GM10248 (cell line): ENCODE measurements at regions of chr19 and their contacts with region 1.

Region 1: DNA sequence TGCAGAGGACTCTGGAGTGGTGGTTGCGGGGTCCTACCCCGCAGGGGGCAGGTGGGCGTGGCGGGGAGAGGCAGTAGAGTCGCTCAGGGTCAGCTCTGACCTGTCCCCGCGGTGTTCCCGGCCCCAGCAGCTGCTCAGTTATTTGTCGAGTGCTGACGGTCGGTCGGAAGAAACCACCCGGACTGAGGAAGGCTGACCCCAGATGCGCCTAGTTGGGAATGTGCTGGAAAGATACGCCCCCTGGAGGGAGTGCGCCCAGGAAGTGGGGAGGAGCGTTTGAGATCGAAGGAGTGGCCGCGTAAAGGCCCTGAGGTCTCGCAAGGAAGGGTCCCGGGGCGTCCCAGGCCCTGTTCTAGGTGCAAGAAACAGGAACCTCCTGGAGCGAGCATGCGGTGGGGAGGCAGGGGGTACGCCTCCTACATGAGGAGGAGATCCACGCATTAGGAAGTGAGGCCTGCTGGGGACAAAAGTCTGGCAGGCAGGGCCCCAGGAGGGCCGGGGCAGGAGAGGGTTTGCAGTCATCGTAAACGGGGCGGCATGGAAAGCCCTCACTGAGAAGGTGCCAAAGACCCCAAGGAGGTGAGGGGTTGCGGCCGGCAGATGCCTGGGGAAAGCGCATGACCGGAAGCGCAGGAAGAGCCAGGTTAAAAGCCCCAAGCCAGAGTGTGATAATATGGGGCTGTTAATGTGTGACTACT is 9.2 kb downstream of the CCDC8 start:
- DNase-seq: no peak
- CTCF ChIP-seq: no peak

Region 2: DNA sequence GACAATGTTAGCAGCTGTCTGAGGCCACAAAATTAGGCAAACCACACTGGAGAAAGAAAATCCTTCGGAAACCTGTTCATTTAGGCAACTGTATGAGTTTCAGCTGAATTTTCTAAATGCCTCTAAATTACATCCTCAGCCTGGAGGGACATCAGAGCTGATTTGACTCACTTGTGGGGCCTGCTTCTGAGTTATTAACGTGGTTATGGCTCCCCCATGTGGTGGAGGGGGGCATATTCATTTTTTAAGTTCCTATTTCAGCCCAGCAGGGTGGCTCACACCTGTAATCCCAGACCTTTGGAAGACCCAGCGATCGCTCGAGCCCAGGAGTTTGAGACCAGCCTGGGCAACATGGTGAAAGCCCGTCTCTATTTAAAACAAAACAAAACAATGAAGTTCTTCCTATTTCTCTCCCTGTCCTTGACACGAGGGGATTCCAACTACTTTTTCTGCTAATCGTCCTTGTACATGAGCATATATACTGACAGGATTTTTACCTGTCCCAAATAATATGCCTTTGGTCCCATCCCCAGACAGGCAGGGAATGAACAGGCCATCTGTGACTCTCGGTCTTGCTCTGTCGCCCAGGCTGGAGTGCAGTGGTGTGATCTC is 138.9 kb before region 1 on chr19:
- CTCF ChIA-PET with region 1: no interaction called
- POLR2A ChIA-PET with region 1: no interaction called
- DNase-seq: peak; percentile 73
- CTCF ChIP-seq: peak; percentile 75

Region 3: GRCh38 chr19:46339446-46339845 is 64.8 kb before region 1 on chr19:
- CTCF ChIA-PET with region 1: no interaction called
- POLR2A ChIA-PET with region 1: no interaction called
- DNase-seq: no peak
- CTCF ChIP-seq: no peak

Region 4: GRCh38 chr19:46392243-46392801 is 11.9 kb before region 1 on chr19:
- CTCF ChIA-PET with region 1: interaction called, 13 read pairs
- POLR2A ChIA-PET with region 1: interaction called, 3 read pairs
- DNase-seq: no peak
- CTCF ChIP-seq: no peak

Region 5: GRCh38 chr19:46435009-46435408 is 30.8 kb after region 1 on chr19:
- CTCF ChIA-PET with region 1: no interaction called
- POLR2A ChIA-PET with region 1: no interaction called
- DNase-seq: no peak
- CTCF ChIP-seq: no peak